ENCODE measurements at regions of chr17 and their contacts with region 1.

Region 1: GRCh38 chr17:51820252-51820651 is 338.3 kb downstream of the CA10 start:
- DNase-seq: no peak
- H3K4me3 ChIP-seq: no peak overlapping the region
- H3K27ac ChIP-seq: no peak overlapping the region
- H3K4me1 ChIP-seq: no peaks in the 10 kb centered on the region
- H3K27me3 ChIP-seq: no peaks in the 10 kb centered on the region
- CTCF ChIP-seq: no peak
- POLR2A ChIP-seq: no peak

Region 2: GRCh38 chr17:51888816-51889215 is 68.6 kb after region 1 on chr17:
- intact Hi-C with region 1: loop called (anchors 10 kb)
- DNase-seq: no peak
- H3K4me3 ChIP-seq: no peak overlapping the region
- H3K27ac ChIP-seq: no peak overlapping the region
- H3K4me1 ChIP-seq: no peaks in the 10 kb centered on the region
- H3K27me3 ChIP-seq: no peaks in the 10 kb centered on the region
- CTCF ChIP-seq: no peak
- POLR2A ChIP-seq: no peak